Activated CD8-positive, alpha-beta T cell treated with anti-CD3 and anti-CD28 coated beads for 36 hours (primary cell): ENCODE measurements at regions of chr22 and their contacts with region 1.

Region 1: DNA sequence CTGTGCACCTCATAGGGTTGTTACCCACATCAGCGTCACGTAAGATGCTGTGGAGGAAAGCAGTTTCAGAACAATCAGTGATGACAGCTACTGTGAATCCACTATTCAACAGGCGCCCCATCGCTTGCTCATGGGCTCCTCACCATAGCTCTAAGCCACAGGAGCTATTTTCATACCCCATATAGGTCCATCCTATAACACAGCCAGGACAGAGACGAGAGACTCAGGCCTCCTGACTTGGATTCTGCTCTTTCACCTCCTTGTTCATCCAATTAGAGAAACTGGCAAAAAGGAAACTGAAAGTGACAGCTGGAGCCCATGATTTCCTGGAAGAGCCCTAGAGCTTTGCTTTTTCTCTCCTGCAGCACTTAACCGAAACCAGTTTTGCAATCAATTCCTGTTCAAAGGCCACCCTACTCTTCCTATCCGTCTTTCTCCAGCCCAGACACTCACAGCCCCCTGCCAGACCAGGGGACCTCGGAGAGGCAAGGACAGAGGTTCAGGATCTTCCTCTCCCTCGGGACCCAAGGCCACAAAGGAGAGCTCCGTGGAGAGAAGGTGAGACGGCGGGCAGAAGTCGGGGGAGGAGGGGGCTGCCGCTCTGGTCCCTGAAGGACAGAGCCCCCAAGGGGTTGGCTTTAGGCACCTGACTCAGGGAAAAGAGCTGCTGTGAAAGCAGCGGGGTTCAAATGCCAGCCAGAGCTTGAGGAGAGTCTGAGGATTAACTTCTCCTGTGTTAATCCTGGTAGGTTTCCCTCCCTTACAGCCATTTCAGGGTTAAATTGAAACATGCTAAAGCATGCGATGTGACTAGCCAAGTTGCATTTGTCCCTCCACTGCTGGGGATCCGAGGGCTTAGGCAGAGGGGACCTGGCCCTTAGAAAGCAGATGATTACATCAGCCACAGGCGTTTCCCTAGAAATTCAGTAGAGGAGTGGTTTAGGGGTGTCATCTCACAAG is at the start of gene APOL6:
- DNase-seq: peak; percentile 76
- ATAC-seq: peak; percentile 72
- H3K4me3 Mint-ChIP-seq: peak within 1 kb of the TSS; percentile 99
- H3K27ac Mint-ChIP-seq: peak within 1 kb of the TSS; percentile 100
- H3K4me1 Mint-ChIP-seq: peaks cover 35% of the 10 kb centered on the region
- H3K27me3 Mint-ChIP-seq: no peaks in the 10 kb centered on the region
- CTCF ChIP-seq: no peak
- total RNA-seq, gene APOL6: 37.1 to 38.0 TPM

Region 2: GRCh38 chr22:35627264-35628041 is 20.9 kb before region 1 on chr22:
- CTCF ChIA-PET with region 1: interaction called, 4 read pairs
- POLR2A ChIA-PET with region 1: interaction called, 31 read pairs
- intact Hi-C with region 1: no loop called
- DNase-seq: peak; percentile 87
- ATAC-seq: peak; percentile 69
- H3K4me3 Mint-ChIP-seq: peak overlapping the region; percentile 78
- H3K27ac Mint-ChIP-seq: peak overlapping the region; percentile 86
- H3K4me1 Mint-ChIP-seq: peaks cover 26% of the 10 kb centered on the region
- H3K27me3 Mint-ChIP-seq: peaks cover 7% of the 10 kb centered on the region
- CTCF ChIP-seq: peak; percentile 58

Region 3: DNA sequence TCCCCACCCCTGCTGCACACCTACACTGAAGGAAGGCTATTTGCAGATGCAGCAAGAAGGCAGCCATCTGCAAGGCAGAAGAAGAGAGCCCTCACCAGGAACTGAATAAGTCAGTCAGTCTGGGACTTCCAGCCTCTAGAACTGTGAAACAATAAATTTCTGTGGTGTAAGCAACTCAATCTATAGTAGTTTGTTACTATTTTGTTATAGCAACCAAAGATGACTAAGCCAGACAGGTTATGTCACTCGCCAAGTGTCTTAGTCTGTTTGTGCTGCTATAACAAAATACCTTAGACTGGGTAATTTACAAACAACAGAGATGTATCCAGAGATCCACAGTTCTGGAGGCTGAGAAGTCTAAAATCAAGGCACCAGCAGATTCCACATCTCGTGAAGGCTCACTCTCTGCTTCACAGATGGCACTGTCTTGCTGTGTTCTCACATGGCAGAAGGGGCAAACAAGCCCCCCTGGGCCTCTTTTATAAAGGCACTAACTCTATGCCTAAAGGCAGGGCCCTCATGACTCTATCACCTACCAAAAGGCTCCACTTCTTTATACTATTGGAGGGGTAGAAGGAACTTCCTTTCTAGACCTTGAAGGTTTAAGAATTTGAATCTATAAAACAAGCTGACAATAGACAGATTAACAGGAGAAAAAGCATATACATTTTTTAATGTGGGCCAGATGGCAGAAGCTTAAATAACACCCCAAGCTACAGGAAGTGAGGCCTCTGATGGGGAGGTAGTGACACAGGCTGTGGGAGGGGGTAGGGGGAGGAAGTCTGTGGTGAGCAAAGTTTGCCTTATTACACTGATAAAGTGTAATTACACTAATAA is 12.2 kb after region 1 on chr22:
- CTCF ChIA-PET with region 1: interaction called, 13 read pairs
- POLR2A ChIA-PET with region 1: interaction called, 95 read pairs
- intact Hi-C with region 1: no loop called
- DNase-seq: peak; percentile 70
- ATAC-seq: peak; percentile 78
- H3K4me3 Mint-ChIP-seq: peak overlapping the region; percentile 24
- H3K27ac Mint-ChIP-seq: peak overlapping the region; percentile 96
- H3K4me1 Mint-ChIP-seq: peaks cover 74% of the 10 kb centered on the region
- H3K27me3 Mint-ChIP-seq: no peaks in the 10 kb centered on the region
- CTCF ChIP-seq: no peak

Region 4: DNA sequence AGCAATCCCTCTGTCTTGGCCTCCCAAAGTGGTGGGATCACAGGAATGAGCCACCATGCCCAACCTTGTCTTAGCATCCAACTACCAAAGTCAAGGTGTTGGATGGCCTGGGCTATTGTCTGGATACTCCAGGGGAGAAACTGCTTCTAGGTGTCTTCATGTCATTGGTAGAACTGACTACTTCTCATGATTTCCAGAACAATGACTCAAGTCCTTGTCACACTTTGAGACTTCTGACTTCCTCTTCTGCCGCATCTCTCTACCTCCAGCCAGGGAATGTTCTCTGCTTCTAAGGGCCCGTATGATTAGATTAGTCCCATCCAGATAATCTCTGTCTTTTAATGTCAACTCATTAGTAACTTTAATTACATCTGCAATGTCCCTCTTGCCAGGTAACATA is 30.5 kb after region 1 on chr22:
- CTCF ChIA-PET with region 1: interaction called, 4 read pairs
- POLR2A ChIA-PET with region 1: interaction called, 43 read pairs
- intact Hi-C with region 1: no loop called
- DNase-seq: no peak
- ATAC-seq: peak; percentile 31
- H3K4me3 Mint-ChIP-seq: no peak overlapping the region
- H3K27ac Mint-ChIP-seq: peak overlapping the region; percentile 88
- H3K4me1 Mint-ChIP-seq: peaks cover 25% of the 10 kb centered on the region
- H3K27me3 Mint-ChIP-seq: no peaks in the 10 kb centered on the region
- CTCF ChIP-seq: no peak

Region 5: GRCh38 chr22:35697142-35697541 is 48.8 kb after region 1 on chr22:
- CTCF ChIA-PET with region 1: no interaction called
- POLR2A ChIA-PET with region 1: no interaction called
- intact Hi-C with region 1: loop called (anchors 10 kb)
- DNase-seq: peak; percentile 66
- ATAC-seq: peak; percentile 52
- H3K4me3 Mint-ChIP-seq: no peak overlapping the region
- H3K27ac Mint-ChIP-seq: no peak overlapping the region
- H3K4me1 Mint-ChIP-seq: no peaks in the 10 kb centered on the region
- H3K27me3 Mint-ChIP-seq: no peaks in the 10 kb centered on the region
- CTCF ChIP-seq: no peak

Region 6: DNA sequence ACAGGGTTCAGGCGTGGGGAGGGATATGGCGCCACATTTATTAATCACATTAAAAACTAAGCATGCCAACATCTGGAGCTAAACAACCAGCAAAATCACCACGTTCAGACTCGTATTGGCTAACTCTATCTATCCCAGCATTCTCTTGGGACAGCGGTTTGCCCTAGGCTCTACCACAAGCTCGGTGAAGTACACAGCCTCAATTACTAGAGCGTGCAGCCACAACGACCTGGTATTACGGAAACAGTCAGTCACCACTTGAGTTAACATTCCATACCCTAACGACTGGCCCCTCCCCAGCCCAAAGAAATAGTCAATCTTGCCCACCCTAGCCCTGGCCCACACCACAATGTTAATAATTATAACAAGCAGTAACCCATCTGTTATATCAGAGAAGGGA is 101.5 kb after region 1 on chr22:
- CTCF ChIA-PET with region 1: no interaction called
- POLR2A ChIA-PET with region 1: no interaction called
- intact Hi-C with region 1: no loop called
- DNase-seq: no peak
- ATAC-seq: no peak
- H3K4me3 Mint-ChIP-seq: no peak overlapping the region
- H3K27ac Mint-ChIP-seq: no peak overlapping the region
- H3K4me1 Mint-ChIP-seq: peaks cover 8% of the 10 kb centered on the region
- H3K27me3 Mint-ChIP-seq: no peaks in the 10 kb centered on the region
- CTCF ChIP-seq: no peak

Region 7: DNA sequence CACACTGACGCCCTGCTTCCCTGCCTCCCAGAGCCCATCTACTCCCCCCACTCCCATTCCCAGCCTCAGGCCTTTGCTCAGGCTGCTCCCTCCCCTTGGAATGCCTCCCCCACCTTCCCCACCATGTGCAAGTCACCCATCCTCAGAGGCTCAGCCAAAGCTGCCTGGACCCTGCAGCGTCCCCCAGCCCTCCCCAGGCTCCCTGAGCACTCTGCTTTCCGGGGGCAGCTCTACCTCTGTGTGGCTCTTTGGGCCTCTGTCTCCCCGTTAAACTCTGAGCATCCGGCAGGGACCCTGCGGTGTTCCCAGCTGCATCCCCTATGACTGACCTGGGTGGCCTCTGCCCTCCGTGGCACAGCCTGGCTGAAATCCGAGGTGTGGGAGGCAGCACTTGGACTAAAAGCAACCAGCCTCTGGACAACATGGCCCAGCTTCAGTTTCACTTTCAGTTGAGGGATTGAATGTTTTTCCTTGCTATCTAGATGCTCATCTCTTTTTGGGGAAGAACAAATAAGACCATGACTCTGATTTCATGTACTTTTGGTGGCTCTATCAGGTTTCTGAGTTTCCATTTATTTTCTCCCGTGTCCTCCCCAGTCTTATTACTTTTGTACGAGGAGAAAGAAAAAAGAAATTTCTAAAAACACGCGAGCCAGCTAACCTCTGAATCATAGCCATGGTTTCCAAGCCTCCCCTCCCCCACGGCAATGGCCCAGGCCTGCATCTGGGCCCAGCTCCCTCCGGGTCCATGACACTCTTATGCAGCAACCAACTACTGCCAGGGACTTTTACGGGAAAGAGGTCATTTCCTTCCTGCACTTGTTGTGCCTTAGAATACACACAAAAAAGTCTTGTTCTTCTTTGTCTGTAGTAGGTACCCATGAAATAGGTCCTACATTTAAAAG is 508.4 kb after region 1 on chr22:
- CTCF ChIA-PET with region 1: interaction called, 3 read pairs
- POLR2A ChIA-PET with region 1: interaction called, 13 read pairs
- intact Hi-C with region 1: no loop called
- DNase-seq: peak; percentile 88
- ATAC-seq: peak; percentile 50
- H3K4me3 Mint-ChIP-seq: peak overlapping the region; percentile 89
- H3K27ac Mint-ChIP-seq: peak overlapping the region; percentile 99
- H3K4me1 Mint-ChIP-seq: peaks cover 87% of the 10 kb centered on the region
- H3K27me3 Mint-ChIP-seq: no peaks in the 10 kb centered on the region
- CTCF ChIP-seq: no peak